ENCODE measurements at regions of chr16 and their contacts with region 1.

Region 1: GRCh38 chr16:48156790-48157209 is 1.0 kb upstream of the ABCC12 start:
- DNase-seq: peak; percentile 66 to 88
- ATAC-seq: peak; percentile 82 to 90
- H3K4me3 ChIP-seq: no peak overlapping the region
- H3K27ac ChIP-seq: peak overlapping the region; percentile 72 to 85
- H3K4me1 ChIP-seq: peaks cover 34% of the 10 kb centered on the region
- CTCF ChIP-seq: peak; percentile 91
- EP300 ChIP-seq: no peak
- POLR2A ChIP-seq: no peak
- RAD21 ChIP-seq: peak; percentile 97 to 98

Region 2: GRCh38 chr16:47037746-47038458 is 1118.9 kb before region 1 on chr16:
- CTCF ChIA-PET with region 1: interaction called, 15 read pairs
- POLR2A ChIA-PET with region 1: no interaction called
- DNase-seq: peak; percentile 79 to 89
- ATAC-seq: peak; percentile 92 to 98
- H3K4me3 ChIP-seq: peak overlapping the region; percentile 62
- H3K27ac ChIP-seq: peak overlapping the region; percentile 82 to 95
- H3K4me1 ChIP-seq: no peaks in the 10 kb centered on the region
- CTCF ChIP-seq: peak; percentile 86
- EP300 ChIP-seq: no peak
- POLR2A ChIP-seq: no peak
- RAD21 ChIP-seq: peak; percentile 73 to 87

Region 3: DNA sequence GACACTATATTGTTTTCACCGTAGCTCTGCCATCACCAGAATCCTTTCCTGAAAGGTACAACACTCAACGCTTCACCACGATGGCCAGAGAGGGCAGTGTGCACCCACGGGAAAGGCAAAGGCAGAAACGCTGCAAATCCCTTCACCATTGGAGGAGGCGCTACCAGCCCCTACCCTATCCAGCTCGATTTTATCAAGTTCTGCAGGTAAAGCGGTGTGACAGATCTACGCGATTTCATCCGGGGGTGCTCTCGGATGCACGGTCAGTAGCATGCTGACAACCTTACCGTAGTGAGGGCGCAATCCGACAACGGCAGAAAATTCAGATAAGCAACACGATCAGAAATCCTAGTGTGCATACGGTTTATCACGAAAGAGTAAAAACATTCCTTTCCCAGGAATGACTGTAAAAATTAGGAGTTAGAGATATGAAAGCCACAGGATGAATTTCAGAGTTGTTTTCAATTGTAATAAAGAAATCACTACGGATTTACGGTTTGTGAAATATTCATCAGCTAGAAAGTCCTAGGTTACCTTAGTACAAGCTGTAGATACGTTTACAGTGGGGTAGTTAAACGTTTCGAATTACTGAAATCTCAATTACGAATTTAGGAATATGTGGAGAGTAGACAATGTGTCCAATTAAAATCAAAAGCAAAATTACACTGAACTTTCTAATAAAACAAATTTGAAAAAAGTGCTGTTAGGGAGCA is 1014.9 kb before region 1 on chr16:
- CTCF ChIA-PET with region 1: interaction called, 12 read pairs
- POLR2A ChIA-PET with region 1: no interaction called
- DNase-seq: peak; percentile 82 to 92
- ATAC-seq: peak; percentile 52 to 83; a peak in 5 of 6 replicates
- H3K4me3 ChIP-seq: peak overlapping the region; percentile 69
- H3K27ac ChIP-seq: peak overlapping the region; percentile 95 to 97; a peak in 2 of 6 replicates
- H3K4me1 ChIP-seq: peaks cover 33% of the 10 kb centered on the region
- CTCF ChIP-seq: peak; percentile 90
- EP300 ChIP-seq: no peak
- POLR2A ChIP-seq: no peak
- RAD21 ChIP-seq: peak; percentile 83 to 88

Region 4: DNA sequence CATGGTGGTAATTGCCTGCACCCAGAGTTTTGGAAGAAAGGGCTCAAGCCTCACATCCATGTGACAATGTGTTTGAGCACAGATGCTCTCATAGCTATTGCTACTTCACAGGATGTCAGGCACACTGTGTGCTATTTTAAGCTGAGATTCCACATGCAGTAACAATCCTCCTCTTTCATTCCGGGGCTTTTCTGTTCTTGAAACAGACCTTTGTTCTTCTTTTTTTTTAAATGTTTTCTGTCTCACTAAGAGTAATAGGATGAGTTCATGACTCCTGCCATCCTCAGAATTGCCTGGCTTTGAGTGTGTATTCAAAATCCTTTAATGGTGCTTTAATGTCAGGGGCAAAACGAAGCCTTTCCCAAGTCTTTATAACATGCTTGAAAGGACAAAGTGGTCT is 199.9 kb before region 1 on chr16:
- CTCF ChIA-PET with region 1: no interaction called
- POLR2A ChIA-PET with region 1: no interaction called
- DNase-seq: no peak
- ATAC-seq: no peak
- H3K4me3 ChIP-seq: no peak overlapping the region
- H3K27ac ChIP-seq: no peak overlapping the region
- H3K4me1 ChIP-seq: no peaks in the 10 kb centered on the region
- CTCF ChIP-seq: no peak
- EP300 ChIP-seq: no peak
- POLR2A ChIP-seq: no peak
- RAD21 ChIP-seq: no peak

Region 5: GRCh38 chr16:48054881-48055601 is 101.8 kb before region 1 on chr16:
- CTCF ChIA-PET with region 1: interaction called, 14 read pairs
- POLR2A ChIA-PET with region 1: no interaction called
- DNase-seq: peak; percentile 30 to 66
- ATAC-seq: peak; percentile 92
- H3K4me3 ChIP-seq: no peak overlapping the region; the same call in 2 of the 3 replicates
- H3K27ac ChIP-seq: peak overlapping the region; percentile 41 to 47; a peak in 3 of 6 replicates
- H3K4me1 ChIP-seq: peaks cover 22% of the 10 kb centered on the region
- CTCF ChIP-seq: peak; percentile 76
- EP300 ChIP-seq: no peak
- POLR2A ChIP-seq: no peak
- RAD21 ChIP-seq: peak; percentile 82 to 88

Region 6: DNA sequence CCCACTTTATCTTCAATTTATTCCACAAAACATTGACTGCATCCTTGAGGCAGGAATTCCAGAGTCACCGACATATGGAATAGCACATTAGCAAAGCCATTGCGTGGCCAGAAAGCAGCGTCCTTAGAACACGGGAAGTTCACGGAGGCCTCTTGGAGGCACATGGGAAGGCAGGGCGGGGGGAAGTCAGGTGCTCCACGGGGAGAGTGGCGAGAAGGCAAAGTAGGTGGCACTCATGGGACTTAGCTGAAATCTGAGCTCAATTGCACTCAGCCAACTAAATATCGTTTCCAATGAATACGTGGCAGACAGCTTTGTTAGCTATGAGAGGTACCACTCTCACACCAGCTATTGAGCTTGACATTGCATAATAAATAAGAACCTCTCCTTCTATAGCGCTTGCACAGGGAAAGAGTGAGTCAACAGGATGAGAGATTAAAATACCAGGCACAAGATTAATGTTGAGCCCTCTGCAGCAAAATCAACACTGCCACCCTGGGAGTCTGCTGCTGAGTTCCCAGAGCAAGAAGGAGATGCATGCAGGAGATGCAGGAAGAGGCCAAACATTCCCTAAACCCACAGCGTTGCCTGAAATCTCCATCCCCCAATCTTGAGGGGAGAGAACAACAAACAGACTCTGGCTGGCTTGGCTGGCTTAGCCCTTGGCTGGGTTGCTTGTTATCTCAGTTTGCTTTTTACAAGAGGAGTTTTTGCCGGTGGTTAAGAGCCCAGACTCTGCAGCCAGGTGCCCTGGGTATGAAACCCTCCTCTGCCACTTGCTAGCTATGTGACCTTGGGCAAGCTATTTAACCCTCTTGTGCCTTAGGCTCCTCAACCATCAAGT is 29.8 kb before region 1 on chr16:
- CTCF ChIA-PET with region 1: interaction called, 14 read pairs
- POLR2A ChIA-PET with region 1: interaction called, 4 read pairs
- DNase-seq: peak; percentile 55 to 97
- ATAC-seq: peak; percentile 77 to 84
- H3K4me3 ChIP-seq: no peak overlapping the region
- H3K27ac ChIP-seq: peak overlapping the region; percentile 89 to 90
- H3K4me1 ChIP-seq: peaks cover 88% of the 10 kb centered on the region
- CTCF ChIP-seq: no peak
- EP300 ChIP-seq: peak; percentile 88 to 92; a peak in 4 of 5 replicates
- POLR2A ChIP-seq: no peak
- RAD21 ChIP-seq: peak; percentile 33 to 64

Region 7: DNA sequence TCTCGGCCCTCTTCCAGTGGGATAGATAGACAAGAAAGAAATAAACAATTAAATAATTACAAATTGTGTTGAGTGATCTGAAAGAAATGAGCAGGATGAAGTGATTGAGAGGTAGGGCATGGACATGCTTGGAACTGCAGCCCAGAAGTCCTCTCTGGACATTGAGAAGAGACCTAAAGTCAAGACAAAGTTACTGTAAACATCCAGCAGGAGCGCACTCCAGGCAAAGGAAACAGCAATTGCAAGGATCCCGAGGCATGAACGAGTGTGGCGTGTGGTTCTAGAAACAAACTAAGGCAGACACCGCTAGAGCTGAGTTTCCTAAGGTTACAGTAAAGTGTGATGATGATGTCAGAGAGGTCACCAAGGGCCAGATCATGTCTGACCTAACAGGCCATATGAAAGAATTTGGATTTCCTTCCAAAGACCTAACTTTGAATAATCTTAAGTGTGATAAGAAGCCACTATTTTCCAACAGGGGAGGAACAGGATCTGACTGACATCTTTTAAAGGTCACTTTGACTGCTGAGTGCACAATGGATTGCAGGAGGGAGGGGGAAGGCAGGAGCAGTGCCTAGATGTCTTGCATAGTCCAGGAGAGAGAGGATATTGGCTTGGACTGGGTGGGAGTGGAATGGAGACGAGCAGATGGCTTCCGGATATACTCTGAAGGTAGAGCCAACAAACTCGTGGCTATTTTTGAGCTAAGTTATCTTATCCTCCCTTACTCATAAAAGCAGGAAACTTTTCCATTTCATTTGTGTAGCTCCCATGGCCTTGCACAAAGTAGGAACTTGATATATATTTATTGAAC is 20.0 kb before region 1 on chr16:
- CTCF ChIA-PET with region 1: interaction called, 13 read pairs
- POLR2A ChIA-PET with region 1: no interaction called
- DNase-seq: no peak
- ATAC-seq: peak in 1 of 2 experiments; percentile 50; a peak in 3 of 6 replicates
- H3K4me3 ChIP-seq: no peak overlapping the region
- H3K27ac ChIP-seq: peak overlapping the region in 1 of 2 experiments; percentile 22; a peak in 2 of 6 replicates
- H3K4me1 ChIP-seq: peaks cover 22% of the 10 kb centered on the region
- CTCF ChIP-seq: no peak
- EP300 ChIP-seq: no peak
- POLR2A ChIP-seq: no peak
- RAD21 ChIP-seq: no peak

Region 8: GRCh38 chr16:48146710-48147109 is 10.1 kb before region 1 on chr16:
- CTCF ChIA-PET with region 1: interaction called, 20 read pairs
- POLR2A ChIA-PET with region 1: no interaction called
- DNase-seq: no peak
- ATAC-seq: no peak
- H3K4me3 ChIP-seq: no peak overlapping the region
- H3K27ac ChIP-seq: no peak overlapping the region
- H3K4me1 ChIP-seq: no peaks in the 10 kb centered on the region
- CTCF ChIP-seq: no peak
- EP300 ChIP-seq: no peak
- POLR2A ChIP-seq: no peak
- RAD21 ChIP-seq: no peak

Region 9: GRCh38 chr16:48300391-48300856 is 143.6 kb after region 1 on chr16:
- CTCF ChIA-PET with region 1: no interaction called
- POLR2A ChIA-PET with region 1: no interaction called
- DNase-seq: peak in 1 of 2 experiments; percentile 12
- ATAC-seq: no peak
- H3K4me3 ChIP-seq: no peak overlapping the region
- H3K27ac ChIP-seq: peak overlapping the region; percentile 54 to 71; a peak in 5 of 6 replicates
- H3K4me1 ChIP-seq: peaks cover 10% of the 10 kb centered on the region; the same call in 2 of the 3 replicates
- CTCF ChIP-seq: no peak
- EP300 ChIP-seq: no peak
- POLR2A ChIP-seq: no peak
- RAD21 ChIP-seq: no peak

Region 10: GRCh38 chr16:48365581-48366164 is 208.9 kb after region 1 on chr16:
- CTCF ChIA-PET with region 1: no interaction called
- POLR2A ChIA-PET with region 1: no interaction called
- DNase-seq: peak; percentile 71 to 93
- ATAC-seq: peak; percentile 95 to 99
- H3K4me3 ChIP-seq: peak overlapping the region; percentile 53
- H3K27ac ChIP-seq: peak overlapping the region; percentile 90 to 92
- H3K4me1 ChIP-seq: peaks cover 46% of the 10 kb centered on the region
- CTCF ChIP-seq: no peak
- EP300 ChIP-seq: no peak
- POLR2A ChIP-seq: peak; percentile 80
- RAD21 ChIP-seq: peak in 1 of 2 experiments; percentile 9; a peak in 1 of 5 replicates

Measured in A549 (cell line).